Activated CD4-positive, alpha-beta T cell treated with anti-CD3 and anti-CD28 coated beads for 36 hours (primary cell): ENCODE measurements at regions of chr15 and their contacts with region 1.

Region 1: GRCh38 chr15:41401904-41402267 is 410 bp downstream of the NDUFAF1 start:
- DNase-seq: no peak
- ATAC-seq: no peak
- H3K4me3 Mint-ChIP-seq: peak overlapping the region; percentile 94
- H3K27ac Mint-ChIP-seq: peak overlapping the region; percentile 92
- H3K4me1 Mint-ChIP-seq: peaks cover 13% of the 10 kb centered on the region
- H3K27me3 Mint-ChIP-seq: no peaks in the 10 kb centered on the region

Region 2: DNA sequence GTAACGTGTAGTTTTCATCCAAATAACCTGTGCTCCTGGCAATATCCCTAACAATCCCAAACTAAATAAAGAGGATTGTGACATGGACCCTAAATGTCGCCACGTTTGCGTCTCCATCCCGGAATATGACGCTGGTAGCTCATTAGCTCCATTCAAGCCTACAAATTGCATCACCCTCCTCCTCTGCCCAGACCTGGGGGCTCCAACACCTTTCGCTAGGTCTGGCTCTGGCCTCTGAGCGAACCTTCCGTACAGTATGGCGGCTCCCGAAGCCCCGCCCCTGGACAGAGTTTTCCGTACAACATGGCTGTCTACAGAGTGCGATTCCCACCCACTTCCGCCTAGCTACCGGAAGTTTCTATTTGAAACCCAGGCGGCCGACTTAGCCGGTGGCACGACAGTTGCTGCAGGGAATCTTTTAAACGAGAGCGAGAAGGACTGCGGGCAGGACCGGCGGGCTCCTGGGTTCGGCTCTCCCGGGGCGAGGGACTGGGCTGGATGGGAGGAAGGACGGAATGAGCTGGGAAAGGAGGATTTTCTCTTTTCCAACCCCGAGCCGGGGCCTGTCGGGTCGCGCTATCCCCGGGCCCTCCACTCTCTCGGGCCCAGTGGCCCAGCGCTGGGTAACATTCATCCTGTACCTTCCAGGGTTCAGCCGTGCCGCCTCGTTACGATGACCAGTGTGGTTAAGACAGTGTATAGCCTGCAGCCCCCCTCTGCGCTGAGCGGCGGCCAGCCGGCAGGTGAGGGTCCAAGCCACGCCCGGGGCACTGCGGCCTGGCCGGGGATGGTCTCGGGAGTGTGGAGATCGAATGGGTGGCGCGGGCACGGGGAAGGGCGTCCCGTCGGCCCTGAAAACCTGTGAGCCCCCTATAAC is 1019.1 kb before region 1 on chr15 and contains the start of gene KNSTRN:
- CTCF ChIA-PET with region 1: no interaction called
- POLR2A ChIA-PET with region 1: no interaction called
- intact Hi-C with region 1: loop called in 1 of 2 experiments (anchors 5 kb)
- DNase-seq: peak; percentile 97
- ATAC-seq: peak; percentile 100
- H3K4me3 Mint-ChIP-seq: peak within 1 kb of the TSS; percentile 93
- H3K27ac Mint-ChIP-seq: peak within 1 kb of the TSS; percentile 78
- H3K4me1 Mint-ChIP-seq: peaks cover 22% of the 10 kb centered on the region
- H3K27me3 Mint-ChIP-seq: no peaks in the 10 kb centered on the region
- total RNA-seq, gene KNSTRN: 56.2 to 58.8 TPM

Region 3: GRCh38 chr15:41283653-41284426 is 118.0 kb before region 1 on chr15:
- CTCF ChIA-PET with region 1: no interaction called
- POLR2A ChIA-PET with region 1: interaction called, 3 read pairs
- intact Hi-C with region 1: loop called in 1 of 2 experiments (anchors 1 kb)
- DNase-seq: peak; percentile 98
- ATAC-seq: peak; percentile 98
- H3K4me3 Mint-ChIP-seq: peak overlapping the region; percentile 90
- H3K27ac Mint-ChIP-seq: peak overlapping the region; percentile 95
- H3K4me1 Mint-ChIP-seq: peaks cover 42% of the 10 kb centered on the region
- H3K27me3 Mint-ChIP-seq: no peaks in the 10 kb centered on the region

Region 4: DNA sequence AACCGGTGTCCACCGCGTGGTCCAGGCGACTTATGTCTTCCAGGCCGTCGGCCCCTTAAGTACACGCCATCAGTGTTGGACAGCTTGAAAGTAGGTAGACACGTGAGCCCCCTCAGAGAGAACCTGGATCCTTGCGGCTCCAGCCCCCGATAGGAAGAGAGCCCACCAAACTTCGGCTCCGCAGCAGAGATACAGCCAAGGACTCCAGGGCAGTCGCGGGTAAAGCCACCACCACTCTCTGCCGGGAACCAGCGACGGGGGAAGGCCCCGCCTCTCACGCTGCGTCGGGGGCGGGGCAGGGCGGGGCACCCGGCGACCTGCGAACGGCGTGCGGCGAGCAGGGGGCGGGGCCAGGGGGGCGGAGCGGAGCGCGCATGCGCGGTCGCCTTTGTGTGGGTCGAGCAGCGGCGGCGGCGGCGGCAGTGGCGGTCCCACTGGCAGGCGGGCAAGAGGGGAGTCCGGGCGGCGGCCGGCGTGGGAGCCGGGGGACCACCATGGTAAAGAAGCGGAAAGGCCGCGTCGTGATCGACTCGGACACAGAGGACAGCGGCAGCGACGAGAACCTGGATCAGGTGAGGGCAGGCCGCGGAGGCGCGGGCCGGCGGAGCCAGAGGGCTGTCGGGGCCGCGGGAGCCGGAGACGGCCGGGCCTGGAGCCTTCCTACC is 15.0 kb after region 1 on chr15 and contains the start of gene RTF1:
- CTCF ChIA-PET with region 1: interaction called, 3 read pairs
- POLR2A ChIA-PET with region 1: interaction called, 6 read pairs
- intact Hi-C with region 1: loop called (anchors 1 to 2 kb)
- DNase-seq: peak; percentile 98
- ATAC-seq: peak; percentile 94
- H3K4me3 Mint-ChIP-seq: peak within 1 kb of the TSS; percentile 88
- H3K27ac Mint-ChIP-seq: peak within 1 kb of the TSS; percentile 92
- H3K4me1 Mint-ChIP-seq: peaks cover 38% of the 10 kb centered on the region
- H3K27me3 Mint-ChIP-seq: no peaks in the 10 kb centered on the region
- total RNA-seq, gene RTF1: 29.4 to 32.3 TPM

Region 5: GRCh38 chr15:42495361-42496212 is 1093.7 kb after region 1 on chr15 and contains the start of gene SNAP23:
- CTCF ChIA-PET with region 1: no interaction called
- POLR2A ChIA-PET with region 1: no interaction called
- intact Hi-C with region 1: loop called in 1 of 2 experiments (anchors 10 kb)
- DNase-seq: peak; percentile 89
- ATAC-seq: peak; percentile 95
- H3K4me3 Mint-ChIP-seq: peak within 1 kb of the TSS; percentile 96
- H3K27ac Mint-ChIP-seq: peak within 1 kb of the TSS; percentile 97
- H3K4me1 Mint-ChIP-seq: peaks cover 68% of the 10 kb centered on the region
- H3K27me3 Mint-ChIP-seq: no peaks in the 10 kb centered on the region
- total RNA-seq, gene SNAP23: 45.5 to 77.5 TPM